ENCODE measurements at regions of chr10 and their contacts with region 1.

Region 1: GRCh38 chr10:63866075-63866746 is 345.0 kb downstream of the REEP3 start:
- DNase-seq: peak; percentile 9
- H3K4me3 ChIP-seq: no peak overlapping the region; the same call in 1 of the 2 replicates
- CTCF ChIP-seq: peak; percentile 77

Region 2: GRCh38 chr10:63465293-63466143 is 400.7 kb before region 1 on chr10 and contains the start of gene JMJD1C:
- CTCF ChIA-PET with region 1: no interaction called
- POLR2A ChIA-PET with region 1: no interaction called
- DNase-seq: no peak
- H3K4me3 ChIP-seq: peak within 1 kb of the TSS; percentile 87
- CTCF ChIP-seq: no peak

Region 3: DNA sequence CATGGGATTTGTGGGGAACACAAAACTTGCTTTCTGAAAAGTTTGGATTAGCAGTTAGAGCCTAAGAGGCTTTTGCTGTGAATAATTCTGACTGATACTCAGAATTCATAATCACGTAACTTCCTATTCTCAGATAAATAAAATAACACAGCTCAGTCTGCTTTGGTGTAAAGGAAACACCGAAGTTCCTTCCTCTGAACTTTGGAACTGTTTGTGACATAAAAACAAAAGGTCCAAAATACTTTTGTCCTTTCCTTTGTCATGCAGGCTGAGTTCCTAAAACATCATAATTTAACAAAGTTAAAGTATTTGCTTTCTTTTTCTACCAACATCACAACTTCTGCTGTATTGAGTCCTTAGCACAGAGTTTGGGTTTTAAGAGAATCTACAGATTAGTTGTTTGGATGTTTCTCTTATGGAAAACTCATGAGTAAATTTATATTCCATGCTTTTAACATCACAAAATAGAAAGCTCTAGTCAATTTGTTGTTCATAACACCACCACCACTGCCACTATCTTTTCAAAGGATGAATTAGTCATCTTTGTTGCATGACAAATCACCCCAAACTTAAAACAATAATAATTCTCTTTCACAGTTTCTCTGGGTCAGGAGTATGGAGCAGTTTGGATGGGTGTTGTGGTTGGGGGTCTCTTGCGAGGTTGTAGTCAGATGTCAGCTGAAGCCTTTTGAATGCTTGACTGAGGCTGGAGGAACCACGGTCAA is 221.6 kb before region 1 on chr10:
- CTCF ChIA-PET with region 1: no interaction called
- POLR2A ChIA-PET with region 1: no interaction called
- DNase-seq: no peak
- H3K4me3 ChIP-seq: no peak overlapping the region
- CTCF ChIP-seq: no peak

Region 4: GRCh38 chr10:63843108-63843507 is 23.1 kb before region 1 on chr10:
- CTCF ChIA-PET with region 1: interaction called, 14 read pairs
- POLR2A ChIA-PET with region 1: no interaction called
- DNase-seq: no peak
- H3K4me3 ChIP-seq: no peak overlapping the region
- CTCF ChIP-seq: no peak

Region 5: GRCh38 chr10:63878428-63878827 is 12.2 kb after region 1 on chr10:
- CTCF ChIA-PET with region 1: interaction called, 32 read pairs
- POLR2A ChIA-PET with region 1: no interaction called
- DNase-seq: no peak
- H3K4me3 ChIP-seq: no peak overlapping the region
- CTCF ChIP-seq: no peak

Region 6: DNA sequence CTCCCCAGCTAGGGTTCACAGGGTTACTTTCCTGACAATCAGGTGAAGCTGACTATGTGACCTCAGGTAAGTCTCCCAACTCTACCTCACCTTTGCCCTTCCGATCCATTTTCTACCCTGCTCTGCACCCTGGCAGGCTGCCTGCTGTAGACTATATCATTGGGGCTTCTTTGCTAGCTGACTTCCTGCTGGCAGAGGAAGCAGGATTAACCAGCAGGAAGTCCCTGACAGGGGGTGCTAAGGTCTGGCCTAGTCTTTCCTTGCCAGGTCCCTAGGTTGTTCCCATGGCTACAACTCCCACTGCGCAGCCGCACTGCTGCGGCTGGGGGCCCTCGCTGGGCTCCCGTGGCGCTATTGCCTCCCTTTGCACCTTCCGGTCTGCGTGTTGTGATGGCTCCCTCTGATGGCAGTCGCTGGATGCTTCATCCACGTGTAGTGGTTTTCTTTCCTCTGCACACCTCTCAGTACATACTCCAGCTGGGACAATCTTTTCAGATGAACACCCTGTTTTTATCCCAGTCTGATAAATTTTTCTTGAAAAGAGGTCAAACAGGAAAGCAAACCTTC is 20.9 kb after region 1 on chr10:
- CTCF ChIA-PET with region 1: interaction called, 32 read pairs
- POLR2A ChIA-PET with region 1: no interaction called
- DNase-seq: no peak
- H3K4me3 ChIP-seq: no peak overlapping the region
- CTCF ChIP-seq: no peak

Region 7: DNA sequence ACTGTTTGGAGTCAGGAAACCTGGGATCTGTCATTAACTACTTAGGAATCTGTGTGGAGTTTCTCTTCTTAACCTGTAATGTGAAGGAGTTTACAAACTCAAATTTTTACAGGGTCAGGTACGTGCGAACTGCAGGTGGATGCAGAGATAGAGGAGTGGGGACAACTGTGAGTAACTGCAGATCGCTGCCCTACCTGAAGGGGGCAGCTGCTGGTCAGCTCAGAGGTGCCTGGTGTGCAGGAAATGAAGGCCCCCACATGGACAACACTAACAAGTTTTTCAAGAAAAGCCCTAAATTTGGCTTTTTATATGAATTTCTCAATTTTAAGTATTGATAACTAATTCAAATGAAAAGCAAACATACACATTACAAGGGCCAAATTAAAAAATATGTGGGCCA is 35.0 kb after region 1 on chr10:
- CTCF ChIA-PET with region 1: interaction called, 15 read pairs
- POLR2A ChIA-PET with region 1: no interaction called
- DNase-seq: no peak
- H3K4me3 ChIP-seq: no peak overlapping the region
- CTCF ChIP-seq: peak; percentile 30

Region 8: GRCh38 chr10:63935705-63936104 is 69.5 kb after region 1 on chr10:
- CTCF ChIA-PET with region 1: interaction called, 11 read pairs
- POLR2A ChIA-PET with region 1: no interaction called
- DNase-seq: no peak
- H3K4me3 ChIP-seq: no peak overlapping the region
- CTCF ChIP-seq: no peak

Region 9: GRCh38 chr10:63976538-63976937 is 110.3 kb after region 1 on chr10:
- CTCF ChIA-PET with region 1: interaction called, 112 read pairs
- POLR2A ChIA-PET with region 1: no interaction called
- DNase-seq: no peak
- H3K4me3 ChIP-seq: no peak overlapping the region
- CTCF ChIP-seq: peak; percentile 67

Region 10: DNA sequence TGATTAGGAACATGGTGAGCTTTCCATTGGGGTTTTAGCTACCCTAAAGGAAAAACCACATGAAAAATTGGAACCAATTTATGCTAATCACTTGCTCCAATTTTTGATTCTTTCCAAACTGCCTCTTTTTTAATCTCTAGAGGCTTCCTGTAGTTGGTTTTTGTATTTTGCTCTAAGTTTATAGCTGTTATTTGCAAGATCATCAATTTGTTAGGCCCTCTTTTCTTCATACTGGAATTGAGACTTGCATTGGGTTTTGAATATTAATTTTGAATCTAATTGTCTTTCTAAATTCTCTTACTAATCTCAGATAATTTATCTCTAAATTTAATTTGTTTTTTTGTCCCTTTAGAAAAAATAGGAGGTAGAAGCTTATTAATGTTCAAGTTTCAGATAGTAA is 368.3 kb after region 1 on chr10:
- CTCF ChIA-PET with region 1: no interaction called
- POLR2A ChIA-PET with region 1: no interaction called
- DNase-seq: no peak
- H3K4me3 ChIP-seq: no peak overlapping the region
- CTCF ChIP-seq: no peak

Measured in AG04449 (cell line).